K562 (cell line): ENCODE measurements at regions of chr1 and their contacts with region 1.

Region 1: DNA sequence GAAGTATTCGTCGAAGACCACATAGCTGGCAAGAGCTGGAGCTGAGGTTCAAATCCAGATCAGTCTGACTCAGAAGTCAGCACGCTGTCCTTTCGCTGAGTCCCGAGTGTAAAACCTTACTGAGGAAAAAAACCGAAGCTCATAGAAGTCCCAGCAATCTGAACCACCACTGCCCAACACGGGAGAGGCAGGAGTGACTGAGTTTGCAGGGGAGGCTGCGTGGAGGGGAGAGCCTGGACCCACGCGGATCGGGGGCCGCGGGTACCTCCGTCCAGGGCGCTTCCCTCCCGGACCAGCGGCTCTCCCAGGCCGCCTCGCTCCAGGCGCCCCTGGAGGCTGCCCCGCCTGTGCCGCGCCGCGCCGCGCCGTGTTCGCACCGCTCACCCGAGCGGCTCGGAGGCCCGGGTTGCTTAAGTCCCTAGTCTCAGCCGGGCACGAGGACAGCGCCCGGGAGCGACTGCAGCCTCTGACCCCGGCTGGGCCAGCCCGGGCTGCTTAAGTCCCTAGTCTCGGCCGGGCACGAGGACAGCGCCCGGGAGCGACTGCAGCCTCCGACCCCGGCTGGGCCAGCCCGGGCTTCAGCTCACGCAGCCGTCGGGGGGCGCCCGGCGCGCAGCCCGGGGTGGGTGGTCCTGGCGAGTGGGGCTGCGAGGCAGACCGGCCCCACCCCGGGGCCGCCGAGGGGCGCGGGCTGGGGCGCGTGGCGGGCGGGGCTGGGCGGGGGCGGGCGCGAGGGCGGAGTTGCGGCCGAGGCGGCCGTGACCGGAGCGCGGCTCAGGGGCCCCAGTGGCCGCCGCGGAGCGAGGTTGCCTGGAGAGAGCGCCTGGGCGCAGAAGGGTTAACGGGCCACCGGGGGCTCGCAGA is at the start of gene ADAMTSL4:
- DNase-seq: peak; percentile 84 to 94 (median 90)
- ATAC-seq: peak; percentile 54
- H3K4me3 ChIP-seq: peak within 1 kb of the TSS; percentile 75
- H3K27ac ChIP-seq: peak within 1 kb of the TSS; percentile 87
- H3K4me1 ChIP-seq: peaks cover 53 to 84% of the 10 kb centered on the region in 2 experiments
- H3K27me3 ChIP-seq: no peaks in the 10 kb centered on the region
- CTCF ChIP-seq: peak in 2 of 3 experiments; percentile 3; a peak in 2 of 6 replicates
- EP300 ChIP-seq: no peak
- POLR2A ChIP-seq: peak; percentile 70
- RAD21 ChIP-seq: peak in 1 of 2 experiments; percentile 9; a peak in 1 of 4 replicates
- polyA plus RNA-seq, gene ADAMTSL4: 12.7 to 14.8 TPM

Region 2: DNA sequence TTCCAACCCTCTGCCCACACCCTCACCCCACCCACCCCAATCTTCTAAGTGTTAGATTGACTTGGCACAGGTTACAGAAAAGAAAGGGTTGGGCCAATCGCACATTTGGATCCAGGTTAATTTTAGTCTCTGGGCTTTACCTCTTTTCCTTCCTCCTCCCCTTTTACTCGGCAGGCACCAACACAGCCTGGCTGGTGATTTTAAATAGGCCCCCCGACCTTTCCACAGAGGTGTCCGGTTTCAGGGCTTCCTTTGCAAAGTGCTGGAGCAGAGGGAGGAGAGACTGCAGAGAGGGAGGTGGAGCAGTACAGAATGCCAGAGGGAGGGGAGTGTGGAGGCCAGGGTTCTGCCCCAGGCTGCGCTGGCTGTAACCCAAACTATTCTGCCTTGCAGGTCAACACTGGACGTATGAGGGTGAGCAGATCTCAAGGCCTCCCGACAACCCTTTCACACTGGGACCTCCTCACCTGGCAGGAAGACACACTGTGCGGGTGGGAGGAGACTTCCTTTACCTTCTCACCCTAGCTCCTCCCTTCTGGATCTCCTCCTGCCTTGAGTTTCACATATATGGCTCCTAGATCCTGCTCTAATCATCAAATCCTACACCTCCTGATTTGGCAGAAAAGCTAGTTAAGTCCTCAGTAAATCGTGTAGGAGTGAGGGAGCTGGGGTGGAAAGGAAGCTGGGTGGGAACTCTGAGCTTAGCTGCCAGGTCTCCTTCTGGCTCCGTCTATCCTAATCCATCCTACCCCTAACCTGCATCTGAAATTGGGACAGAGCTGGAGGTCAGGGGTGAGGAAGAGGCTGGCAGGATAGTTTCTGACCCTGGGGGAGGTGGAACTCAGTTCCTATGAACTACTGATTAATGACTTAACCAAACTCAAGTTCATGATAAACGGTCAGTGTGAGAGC is 288.9 kb before region 1 on chr1:
- CTCF ChIA-PET with region 1: no interaction called
- POLR2A ChIA-PET with region 1: interaction called, 3 read pairs
- in situ Hi-C with region 1: no loop called
- intact Hi-C with region 1: loop called (anchors 5 kb)
- DNase-seq: peak in 2 of 4 experiments; percentile 66 to 75
- ATAC-seq: peak; percentile 79
- H3K4me3 ChIP-seq: no peak overlapping the region
- H3K27ac ChIP-seq: 0 out of 3 replicates have a peak overlapping the region, but pooled peaks have one; percentile 3
- H3K4me1 ChIP-seq: peaks cover 23 to 26% of the 10 kb centered on the region in 2 experiments
- H3K27me3 ChIP-seq: peaks cover 0 to 4% of the 10 kb centered on the region in 2 experiments; a peak in 2 of 5 replicates
- CTCF ChIP-seq: no peak
- EP300 ChIP-seq: no peak
- POLR2A ChIP-seq: no peak
- RAD21 ChIP-seq: no peak

Region 3: DNA sequence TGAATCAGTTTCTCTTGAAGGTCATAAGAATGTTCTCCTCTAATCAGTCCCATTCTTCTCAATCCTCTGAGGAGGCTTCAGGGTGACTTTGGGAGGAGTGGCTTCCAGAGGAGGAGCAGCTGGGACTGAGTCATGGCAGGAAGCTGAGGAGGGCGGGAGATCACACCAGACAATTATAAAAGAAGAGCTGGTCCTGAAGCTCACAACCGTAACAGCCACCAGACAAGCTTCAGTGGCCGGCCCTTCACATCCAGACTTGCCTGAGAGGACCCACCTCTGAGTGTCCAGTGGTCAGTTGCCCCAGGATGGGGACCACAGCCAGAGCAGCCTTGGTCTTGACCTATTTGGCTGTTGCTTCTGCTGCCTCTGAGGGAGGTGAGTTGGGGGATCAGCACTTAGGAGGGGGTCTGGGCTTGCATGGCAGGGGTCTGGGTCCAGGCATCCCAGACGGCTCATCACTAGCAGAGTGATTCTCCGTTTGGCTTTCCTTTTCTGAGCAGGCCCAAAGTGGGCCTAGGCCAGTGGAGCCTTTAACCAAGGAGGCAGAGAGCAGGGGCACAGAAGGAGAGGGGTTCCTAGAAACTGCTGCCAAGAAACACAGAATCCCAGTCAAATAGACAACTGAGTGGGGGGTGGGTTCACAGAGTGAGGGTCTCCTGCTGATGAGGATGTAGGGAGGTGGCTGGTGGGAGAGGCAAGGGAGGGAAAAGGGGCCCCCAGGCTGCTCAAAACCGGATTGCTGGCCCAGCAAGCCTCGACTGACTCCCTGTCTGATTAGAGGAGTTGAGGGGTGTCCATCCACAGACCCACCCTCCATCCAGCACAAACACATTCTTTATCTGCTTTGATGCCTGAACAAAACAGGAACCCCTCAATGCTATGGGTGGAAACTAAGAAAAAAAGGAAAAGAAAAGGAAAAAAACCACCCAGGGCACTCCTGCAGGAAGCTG is 40.7 kb before region 1 on chr1 and contains the start of gene ECM1:
- CTCF ChIA-PET with region 1: no interaction called
- POLR2A ChIA-PET with region 1: no interaction called
- in situ Hi-C with region 1: no loop called
- intact Hi-C with region 1: loop called (anchors 5 kb)
- DNase-seq: peak; percentile 71 to 91 (median 80)
- ATAC-seq: peak; percentile 87
- H3K4me3 ChIP-seq: peak within 1 kb of the TSS; percentile 38
- H3K27ac ChIP-seq: peak within 1 kb of the TSS; percentile 82
- H3K4me1 ChIP-seq: peaks cover 50 to 52% of the 10 kb centered on the region in 2 experiments
- H3K27me3 ChIP-seq: no peaks in the 10 kb centered on the region
- CTCF ChIP-seq: no peak
- EP300 ChIP-seq: peak; percentile 66
- POLR2A ChIP-seq: peak; percentile 83
- RAD21 ChIP-seq: no peak
- polyA plus RNA-seq, gene ECM1: 6.6 to 7.0 TPM

Region 4: DNA sequence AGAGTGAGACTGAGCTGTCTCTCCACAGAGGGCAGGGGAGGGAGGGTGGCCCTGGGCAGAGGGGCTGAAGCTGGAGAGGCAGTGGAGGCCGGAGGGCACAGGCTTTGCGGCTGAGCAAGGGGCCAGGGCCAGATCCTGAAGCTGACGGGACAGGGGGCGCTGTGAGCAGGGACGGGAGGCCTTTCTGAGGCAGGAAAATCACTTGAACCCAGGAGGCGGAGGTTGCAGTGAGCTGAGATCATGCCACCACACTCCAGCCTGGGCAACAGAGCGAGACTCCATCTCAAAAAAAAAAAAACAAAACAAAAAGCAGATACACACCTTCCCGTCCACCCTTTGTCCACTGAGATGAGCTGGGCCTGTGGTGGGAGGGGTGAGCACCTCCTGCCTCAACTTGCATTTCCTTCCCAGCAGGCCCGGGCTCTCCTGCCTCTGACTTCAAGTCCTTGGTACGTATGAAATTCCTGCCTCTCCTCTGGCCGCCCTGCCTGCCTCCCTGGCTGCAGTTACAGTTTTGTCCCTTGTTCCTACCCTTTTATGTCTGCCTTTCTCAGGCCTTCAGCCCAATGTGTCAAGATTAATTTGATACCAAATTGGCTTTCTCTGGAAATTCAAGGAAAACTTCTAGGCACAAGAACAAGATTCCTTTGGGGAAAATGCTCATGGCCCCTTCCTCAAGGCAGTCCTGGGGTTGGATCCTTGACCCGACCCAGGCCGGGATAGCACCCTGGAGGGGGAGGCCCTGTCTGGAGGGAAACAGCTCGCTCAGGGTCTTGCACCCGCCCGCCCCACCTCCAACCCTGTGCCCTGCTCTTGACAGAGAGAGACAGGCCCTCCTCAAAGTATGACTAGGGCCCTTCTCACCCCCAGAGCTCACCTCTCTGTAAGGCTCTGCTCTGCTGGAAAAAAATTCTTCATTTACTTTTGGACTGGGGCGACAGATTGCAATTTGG is 10.9 kb before region 1 on chr1:
- CTCF ChIA-PET with region 1: no interaction called
- POLR2A ChIA-PET with region 1: interaction called, 53 read pairs
- in situ Hi-C with region 1: no loop called
- intact Hi-C with region 1: loop called (anchors 2 kb)
- DNase-seq: peak in 1 of 4 experiments; percentile 48
- ATAC-seq: peak; percentile 75
- H3K4me3 ChIP-seq: no peak overlapping the region
- H3K27ac ChIP-seq: no peak overlapping the region; the same call in 2 of the 3 replicates
- H3K4me1 ChIP-seq: peaks cover 4 to 20% of the 10 kb centered on the region in 2 experiments; a peak in 4 of 5 replicates
- H3K27me3 ChIP-seq: no peaks in the 10 kb centered on the region
- CTCF ChIP-seq: peak; percentile 24 to 42 (median 38); a peak in 4 of 6 replicates
- EP300 ChIP-seq: no peak
- POLR2A ChIP-seq: no peak
- RAD21 ChIP-seq: peak in 1 of 2 experiments; percentile 31; a peak in 1 of 4 replicates

Region 5: GRCh38 chr1:150979092-150980056 is 430.5 kb after region 1 on chr1:
- CTCF ChIA-PET with region 1: no interaction called
- POLR2A ChIA-PET with region 1: interaction called, 3 read pairs
- in situ Hi-C with region 1: no loop called
- intact Hi-C with region 1: loop called (anchors 5 kb)
- DNase-seq: peak; percentile 78 to 95 (median 84)
- ATAC-seq: peak; percentile 57
- H3K4me3 ChIP-seq: peak overlapping the region; percentile 7; the same call in 1 of the 2 replicates
- H3K27ac ChIP-seq: peak overlapping the region; percentile 79
- H3K4me1 ChIP-seq: peaks cover 44 to 56% of the 10 kb centered on the region in 2 experiments
- H3K27me3 ChIP-seq: no peaks in the 10 kb centered on the region
- CTCF ChIP-seq: peak; percentile 100
- EP300 ChIP-seq: peak; percentile 54; the same call in 1 of the 2 replicates
- POLR2A ChIP-seq: 0 out of 2 replicates have a peak, but pooled peaks have one; percentile 34
- RAD21 ChIP-seq: peak; percentile 89 to 94